Activated CD4-positive, alpha-beta memory T cell treated with anti-CD3 and anti-CD28 coated beads for 36 hours (primary cell): ENCODE measurements at regions of chr11 and their contacts with region 1.

Region 1: DNA sequence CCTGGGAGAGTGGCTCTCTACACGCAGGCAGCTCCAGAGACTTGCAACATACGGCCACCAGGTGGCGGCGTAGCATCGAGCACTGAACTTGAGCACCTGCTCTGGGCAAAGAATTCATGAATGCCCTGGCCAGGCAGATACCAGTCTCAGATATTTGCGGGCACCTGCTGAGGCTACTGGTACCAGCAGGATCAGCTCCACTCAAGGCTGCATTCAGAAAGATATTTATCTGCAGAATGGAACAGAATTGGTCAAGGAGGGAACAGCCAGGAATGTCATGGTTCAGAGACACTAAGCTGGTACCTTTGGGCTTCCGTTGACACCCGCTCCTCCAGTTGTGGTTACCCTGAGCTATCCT is 10.8 kb upstream of the CCDC86 start:
- DNase-seq: peak; percentile 87
- H3K4me3 Mint-ChIP-seq: no peak overlapping the region
- H3K27ac Mint-ChIP-seq: no peak overlapping the region
- H3K4me1 Mint-ChIP-seq: peaks cover 10% of the 10 kb centered on the region
- H3K27me3 Mint-ChIP-seq: peaks cover 13% of the 10 kb centered on the region

Region 2: DNA sequence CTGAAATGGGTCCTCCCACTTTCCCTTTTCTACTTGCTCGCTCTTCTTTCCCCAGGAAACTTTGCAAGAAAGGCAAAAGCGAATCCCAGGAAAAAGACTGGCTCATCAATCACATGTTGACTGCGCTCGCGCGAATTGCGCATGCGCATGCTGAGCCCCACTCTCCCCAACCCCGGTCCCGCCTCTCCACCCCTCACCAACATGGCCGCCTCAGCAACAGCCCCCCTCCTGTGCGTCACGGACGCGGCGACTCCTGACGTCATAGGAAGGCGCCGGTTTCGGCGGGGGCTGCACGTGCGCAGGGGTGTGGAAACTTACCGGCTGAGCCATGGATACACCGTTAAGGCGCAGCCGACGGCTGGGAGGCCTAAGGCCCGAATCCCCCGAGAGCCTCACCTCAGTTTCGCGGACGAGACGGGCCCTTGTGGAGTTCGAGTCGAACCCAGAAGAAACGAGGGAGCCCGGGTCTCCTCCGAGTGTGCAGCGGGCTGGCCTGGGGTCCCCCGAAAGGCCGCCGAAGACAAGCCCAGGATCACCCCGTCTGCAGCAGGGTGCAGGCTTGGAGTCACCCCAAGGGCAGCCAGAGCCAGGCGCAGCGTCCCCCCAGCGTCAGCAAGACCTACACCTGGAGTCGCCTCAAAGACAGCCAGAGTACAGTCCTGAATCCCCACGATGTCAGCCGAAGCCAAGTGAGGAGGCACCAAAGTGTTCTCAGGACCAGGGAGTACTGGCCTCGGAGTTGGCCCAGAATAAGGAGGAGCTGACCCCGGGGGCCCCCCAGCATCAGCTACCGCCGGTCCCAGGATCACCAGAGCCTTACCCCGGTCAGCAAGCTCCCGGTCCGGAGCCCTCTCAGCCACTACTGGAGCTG is 10.9 kb after region 1 on chr11 and contains the start of gene CCDC86:
- CTCF ChIA-PET with region 1: interaction called, 39 read pairs
- POLR2A ChIA-PET with region 1: no interaction called
- intact Hi-C with region 1: no loop called
- DNase-seq: peak; percentile 99
- H3K4me3 Mint-ChIP-seq: peak within 1 kb of the TSS; percentile 88
- H3K27ac Mint-ChIP-seq: peak within 1 kb of the TSS; percentile 85
- H3K4me1 Mint-ChIP-seq: peaks cover 36% of the 10 kb centered on the region
- H3K27me3 Mint-ChIP-seq: no peaks in the 10 kb centered on the region
- total RNA-seq, gene CCDC86: 40.6 to 42.1 TPM

Region 3: GRCh38 chr11:60872961-60873524 is 41.9 kb after region 1 on chr11:
- CTCF ChIA-PET with region 1: interaction called, 15 read pairs
- POLR2A ChIA-PET with region 1: no interaction called
- intact Hi-C with region 1: no loop called
- DNase-seq: no peak
- H3K4me3 Mint-ChIP-seq: no peak overlapping the region
- H3K27ac Mint-ChIP-seq: no peak overlapping the region
- H3K4me1 Mint-ChIP-seq: peaks cover 5% of the 10 kb centered on the region
- H3K27me3 Mint-ChIP-seq: no peaks in the 10 kb centered on the region

Region 4: DNA sequence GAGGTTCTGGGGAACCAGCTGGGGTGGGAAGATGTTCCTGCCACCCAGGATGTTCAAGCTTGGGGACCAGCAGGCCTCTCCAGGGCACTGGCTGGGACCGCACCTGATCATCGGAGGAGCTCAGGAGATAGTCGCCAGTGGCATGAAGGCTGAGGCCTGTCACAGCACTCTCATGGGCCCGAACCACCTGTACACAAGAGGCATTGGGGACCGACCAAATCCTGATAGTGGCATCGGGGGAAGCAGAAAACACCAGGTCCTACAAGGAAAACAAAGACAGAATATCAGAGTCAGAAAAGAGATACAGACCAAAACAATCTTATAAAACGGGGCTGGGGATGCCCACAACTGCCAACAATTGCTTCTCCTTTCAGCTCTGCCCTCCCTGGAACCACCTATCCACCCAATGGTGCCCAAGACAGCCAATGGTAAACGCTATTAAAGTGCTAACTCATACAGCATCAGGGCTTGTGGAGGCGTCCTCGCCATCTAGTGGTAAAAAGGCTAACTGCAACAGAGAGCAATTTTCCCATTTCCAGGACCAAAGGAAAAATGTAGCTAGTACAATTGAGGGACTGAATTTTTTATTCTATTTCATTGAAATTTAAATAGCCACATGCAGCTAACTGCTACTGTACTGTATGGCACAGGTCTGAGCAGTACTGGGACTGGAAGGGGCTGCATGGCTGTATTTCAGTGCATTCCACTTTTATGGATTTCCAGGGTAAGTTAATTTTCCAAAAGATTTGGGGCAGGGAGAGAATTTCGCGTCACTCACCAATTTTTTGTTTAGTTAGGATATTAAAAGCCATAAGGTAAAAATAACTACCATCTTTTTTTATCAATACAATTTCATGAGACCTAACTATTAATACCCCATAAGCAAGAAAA is 68.2 kb after region 1 on chr11:
- CTCF ChIA-PET with region 1: interaction called, 117 read pairs
- POLR2A ChIA-PET with region 1: no interaction called
- intact Hi-C with region 1: loop called (anchors 1 kb)
- DNase-seq: no peak
- H3K4me3 Mint-ChIP-seq: no peak overlapping the region
- H3K27ac Mint-ChIP-seq: no peak overlapping the region
- H3K4me1 Mint-ChIP-seq: peaks cover 11% of the 10 kb centered on the region
- H3K27me3 Mint-ChIP-seq: no peaks in the 10 kb centered on the region

Region 5: GRCh38 chr11:60913793-60914632 is 82.9 kb after region 1 on chr11 and contains the start of gene TMEM109:
- CTCF ChIA-PET with region 1: interaction called, 19 read pairs
- POLR2A ChIA-PET with region 1: no interaction called
- intact Hi-C with region 1: no loop called
- DNase-seq: peak; percentile 92
- H3K4me3 Mint-ChIP-seq: peak within 1 kb of the TSS; percentile 92
- H3K27ac Mint-ChIP-seq: peak within 1 kb of the TSS; percentile 91
- H3K4me1 Mint-ChIP-seq: peaks cover 56% of the 10 kb centered on the region
- H3K27me3 Mint-ChIP-seq: no peaks in the 10 kb centered on the region
- total RNA-seq, gene TMEM109: 101 to 106 TPM

Region 6: DNA sequence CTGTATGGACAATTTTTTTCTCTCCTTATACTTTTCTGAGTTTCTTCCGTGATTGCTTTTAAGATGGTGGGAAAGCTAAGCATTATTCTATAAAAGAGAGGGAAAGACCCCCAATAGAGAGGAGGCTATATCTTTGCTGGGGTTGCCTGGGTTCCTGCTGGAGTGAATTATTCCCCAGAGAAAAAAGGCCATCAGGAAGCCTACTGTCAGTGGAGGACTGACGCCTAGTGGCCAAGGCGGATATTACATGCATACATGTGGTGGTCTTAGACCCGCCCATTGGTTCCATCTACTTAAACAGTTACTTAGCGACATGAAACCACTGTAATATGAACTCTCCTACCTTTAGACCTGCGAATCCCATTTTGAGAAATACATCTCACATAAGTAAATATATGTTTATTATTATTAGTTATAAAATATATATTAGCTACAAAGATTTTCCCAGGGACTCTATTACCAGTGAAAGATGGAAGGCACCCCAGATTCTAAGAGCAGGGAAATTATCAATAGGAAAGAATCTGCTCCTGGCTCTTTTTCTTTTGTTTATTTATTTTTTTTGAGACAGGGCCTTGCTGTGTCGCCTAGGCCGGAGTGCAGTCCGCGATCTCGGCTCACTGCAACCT is 356.5 kb after region 1 on chr11:
- CTCF ChIA-PET with region 1: interaction called, 71 read pairs
- POLR2A ChIA-PET with region 1: no interaction called
- intact Hi-C with region 1: loop called (anchors 1 kb)
- DNase-seq: peak; percentile 85
- H3K4me3 Mint-ChIP-seq: peak overlapping the region; percentile 33
- H3K27ac Mint-ChIP-seq: no peak overlapping the region
- H3K4me1 Mint-ChIP-seq: peaks cover 2% of the 10 kb centered on the region
- H3K27me3 Mint-ChIP-seq: peaks cover 3% of the 10 kb centered on the region

Region 7: DNA sequence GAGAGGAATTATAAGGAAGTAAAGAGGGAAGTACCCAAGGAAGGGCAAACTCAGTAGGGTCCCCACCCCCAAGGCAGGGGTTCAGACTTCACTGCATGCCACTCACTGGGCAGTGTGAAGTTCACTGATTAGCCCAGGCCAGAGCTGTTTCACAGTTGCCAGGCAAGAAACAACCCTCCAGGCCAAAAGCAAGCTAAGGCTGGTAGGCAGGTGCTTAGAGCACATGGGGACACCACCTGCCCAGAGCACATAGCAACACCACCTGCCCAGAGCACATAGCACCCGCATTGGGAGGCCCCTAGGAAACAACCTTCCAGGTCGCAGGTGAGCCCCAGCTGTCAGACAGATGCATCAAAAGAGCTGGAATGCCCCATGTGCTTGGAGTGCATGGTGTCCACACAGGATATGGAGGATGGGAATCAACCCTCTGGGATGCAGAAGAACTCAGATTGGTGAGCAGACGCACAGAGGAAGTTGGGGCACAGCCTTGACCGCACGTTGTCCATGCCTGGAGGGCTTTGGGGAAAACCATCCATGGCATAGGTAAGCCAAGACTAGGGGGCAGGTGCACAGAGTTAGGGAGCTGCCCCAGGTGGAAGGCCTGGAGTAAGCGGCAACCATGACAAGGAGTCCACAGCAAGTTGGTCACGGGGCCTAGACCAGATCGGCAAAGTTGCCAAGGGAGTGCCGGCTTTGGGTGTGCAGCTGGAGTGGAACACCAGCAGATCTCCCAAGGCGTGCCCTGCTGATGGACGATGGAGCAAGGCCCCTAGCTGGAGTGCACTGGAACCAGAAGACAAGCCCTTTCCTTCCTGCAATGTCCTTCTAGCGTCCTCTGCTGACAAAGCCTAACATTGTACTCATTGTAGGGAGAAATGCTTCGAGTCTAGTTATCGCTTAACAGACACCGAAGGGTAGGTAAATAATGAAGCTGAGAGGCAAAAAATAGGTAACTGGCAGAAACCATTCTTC is 553.4 kb after region 1 on chr11:
- CTCF ChIA-PET with region 1: interaction called, 17 read pairs
- POLR2A ChIA-PET with region 1: no interaction called
- intact Hi-C with region 1: no loop called
- DNase-seq: no peak
- H3K4me3 Mint-ChIP-seq: no peak overlapping the region
- H3K27ac Mint-ChIP-seq: no peak overlapping the region
- H3K4me1 Mint-ChIP-seq: peaks cover 4% of the 10 kb centered on the region
- H3K27me3 Mint-ChIP-seq: no peaks in the 10 kb centered on the region